Astrocyte of the cerebellum (primary cell): ENCODE measurements at regions of chr9 and their contacts with region 1.

Region 1: GRCh38 chr9:104482921-104483570 is 21.0 kb upstream of the OR13F1 start:
- DNase-seq: no peak
- H3K4me3 ChIP-seq: no peak overlapping the region
- CTCF ChIP-seq: no peak

Region 2: DNA sequence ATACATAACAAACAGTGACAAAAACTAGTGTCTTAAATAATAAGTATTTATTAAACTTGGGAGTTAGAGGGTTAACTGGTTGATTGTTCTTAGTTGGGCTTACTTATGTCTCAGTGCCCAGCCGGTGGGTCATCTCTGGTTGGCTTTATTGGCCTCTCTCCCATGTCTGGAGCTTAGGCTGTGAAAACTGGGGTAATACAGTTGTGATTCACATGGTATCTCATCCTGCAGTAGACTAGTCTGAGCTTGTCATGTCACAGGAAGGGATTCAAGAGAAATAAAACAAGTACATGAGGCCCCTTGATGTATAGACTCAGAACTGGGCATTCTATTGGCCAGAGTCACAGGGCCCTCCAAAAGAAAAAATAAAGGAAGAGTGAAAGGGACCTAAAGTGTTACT is 855.3 kb before region 1 on chr9:
- in situ Hi-C with region 1: no loop called
- DNase-seq: no peak
- H3K4me3 ChIP-seq: no peak overlapping the region
- CTCF ChIP-seq: no peak

Region 3: GRCh38 chr9:104412238-104412637 is 70.8 kb before region 1 on chr9:
- in situ Hi-C with region 1: loop called (anchors 10 kb)
- DNase-seq: no peak
- H3K4me3 ChIP-seq: no peak overlapping the region
- CTCF ChIP-seq: no peak